ENCODE measurements at regions of chr9 and their contacts with region 1.

Region 1: DNA sequence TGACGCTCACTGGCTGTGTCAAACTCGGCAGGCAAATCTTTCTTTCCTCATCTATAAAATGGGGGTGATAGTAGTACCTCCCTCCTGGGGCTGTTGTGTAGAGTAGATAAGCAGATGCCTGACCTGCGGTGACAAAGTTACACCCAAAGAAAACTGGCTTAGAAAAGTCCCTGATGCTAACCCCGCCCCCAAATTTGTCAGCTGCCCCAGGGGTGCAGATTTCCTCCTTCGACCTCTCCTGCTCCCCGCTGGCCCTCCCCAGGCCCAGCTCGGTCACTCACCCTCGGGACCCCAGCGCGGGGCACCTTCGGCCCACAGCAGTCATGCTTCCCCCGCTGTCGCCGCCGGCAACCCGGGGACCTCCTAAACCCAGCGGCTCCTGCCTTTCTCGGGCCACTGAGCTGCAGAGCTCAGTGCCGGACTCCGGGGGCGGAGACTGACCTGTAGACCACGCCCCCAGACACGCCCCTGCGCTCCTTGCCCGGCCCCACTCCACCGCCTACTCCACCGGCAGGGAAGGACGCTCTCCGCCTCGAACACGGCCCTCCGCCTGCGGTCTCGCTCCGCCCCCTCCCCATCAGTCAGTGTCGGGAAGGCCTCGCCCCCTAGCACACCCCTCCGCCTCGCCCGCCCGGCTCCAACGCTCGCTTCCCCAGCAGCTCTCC is 7.4 kb downstream of the SH2D3C start:
- DNase-seq: peak; percentile 98
- H3K4me3 Mint-ChIP-seq: peak overlapping the region; percentile 85
- H3K27ac Mint-ChIP-seq: peak overlapping the region; percentile 92
- H3K4me1 Mint-ChIP-seq: peaks cover 56% of the 10 kb centered on the region
- H3K27me3 Mint-ChIP-seq: no peaks in the 10 kb centered on the region

Region 2: GRCh38 chr9:127568971-127569885 is 201.8 kb before region 1 on chr9:
- intact Hi-C with region 1: loop called (anchors 2 kb)
- DNase-seq: peak; percentile 76
- H3K4me3 Mint-ChIP-seq: peak overlapping the region; percentile 79
- H3K27ac Mint-ChIP-seq: peak overlapping the region; percentile 84
- H3K4me1 Mint-ChIP-seq: peaks cover 39% of the 10 kb centered on the region
- H3K27me3 Mint-ChIP-seq: no peaks in the 10 kb centered on the region

Region 3: GRCh38 chr9:127785023-127785932 is 14.2 kb after region 1 on chr9:
- intact Hi-C with region 1: loop called (anchors 1 kb)
- DNase-seq: peak; percentile 88
- H3K4me3 Mint-ChIP-seq: peak overlapping the region; percentile 97
- H3K27ac Mint-ChIP-seq: peak overlapping the region; percentile 86
- H3K4me1 Mint-ChIP-seq: peaks cover 56% of the 10 kb centered on the region
- H3K27me3 Mint-ChIP-seq: no peaks in the 10 kb centered on the region

Region 4: DNA sequence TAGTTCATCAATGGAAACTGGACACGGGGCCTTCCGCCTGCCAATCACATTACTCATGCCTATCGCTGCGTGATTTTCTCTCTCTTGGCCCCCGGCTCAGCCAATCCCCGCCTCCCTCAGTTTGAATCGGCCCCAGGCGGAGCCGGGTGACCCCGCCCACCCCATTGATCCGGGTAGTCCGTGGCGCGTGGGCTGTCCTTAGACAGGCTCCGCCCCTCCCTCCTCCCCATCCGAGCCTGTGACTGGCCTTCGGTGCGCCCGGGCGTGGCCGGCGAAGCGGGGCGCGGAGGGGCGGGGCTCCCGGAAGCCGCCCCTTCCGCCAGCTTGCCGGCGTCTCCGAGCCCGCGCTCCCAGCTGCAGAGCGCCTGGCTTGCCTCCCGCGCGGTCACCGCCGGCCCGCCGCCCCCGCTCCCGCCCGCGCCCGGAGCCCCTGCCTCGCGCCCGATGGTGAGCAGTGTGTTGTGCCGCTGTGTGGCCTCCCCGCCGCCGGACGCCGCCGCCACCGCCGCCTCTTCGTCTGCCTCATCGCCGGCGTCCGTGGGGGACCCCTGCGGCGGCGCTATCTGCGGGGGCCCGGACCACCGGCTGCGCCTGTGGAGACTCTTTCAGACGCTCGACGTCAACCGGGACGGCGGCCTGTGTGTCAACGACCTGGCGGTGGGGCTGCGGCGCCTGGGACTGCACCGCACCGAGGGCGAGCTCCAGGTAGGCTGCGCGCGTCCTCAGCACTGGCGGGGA is 297.0 kb after region 1 on chr9 and contains the start of gene SLC25A25:
- intact Hi-C with region 1: loop called (anchors 10 kb)
- DNase-seq: peak; percentile 100
- H3K4me3 Mint-ChIP-seq: peak within 1 kb of the TSS; percentile 93
- H3K27ac Mint-ChIP-seq: peak within 1 kb of the TSS; percentile 73
- H3K4me1 Mint-ChIP-seq: peaks cover 41% of the 10 kb centered on the region
- H3K27me3 Mint-ChIP-seq: no peaks in the 10 kb centered on the region
- total RNA-seq, gene SLC25A25: 11.3 and 11.9 TPM in 2 replicates

Measured in activated T-helper 2 cell treated with anti-CD3 and anti-CD28 coated beads, Interferon-gamma antibody, Interleukin-2, Interleukin-4, amounts not matched to agents 10 μg/mL and 5 μg/mL and 100 μg/mL, durations not matched to agents 14 hours and 24 hours and 36 hours (primary cell).